Right ventricle myocardium superior (tissue), 1 donor: ENCODE measurements at regions of chr20 and their contacts with region 1.

Region 1: GRCh38 chr20:59751056-59751688 is 146.8 kb downstream of the PHACTR3 start:
- DNase-seq: peak; percentile 85
- ATAC-seq: peak; percentile 71

Region 2: DNA sequence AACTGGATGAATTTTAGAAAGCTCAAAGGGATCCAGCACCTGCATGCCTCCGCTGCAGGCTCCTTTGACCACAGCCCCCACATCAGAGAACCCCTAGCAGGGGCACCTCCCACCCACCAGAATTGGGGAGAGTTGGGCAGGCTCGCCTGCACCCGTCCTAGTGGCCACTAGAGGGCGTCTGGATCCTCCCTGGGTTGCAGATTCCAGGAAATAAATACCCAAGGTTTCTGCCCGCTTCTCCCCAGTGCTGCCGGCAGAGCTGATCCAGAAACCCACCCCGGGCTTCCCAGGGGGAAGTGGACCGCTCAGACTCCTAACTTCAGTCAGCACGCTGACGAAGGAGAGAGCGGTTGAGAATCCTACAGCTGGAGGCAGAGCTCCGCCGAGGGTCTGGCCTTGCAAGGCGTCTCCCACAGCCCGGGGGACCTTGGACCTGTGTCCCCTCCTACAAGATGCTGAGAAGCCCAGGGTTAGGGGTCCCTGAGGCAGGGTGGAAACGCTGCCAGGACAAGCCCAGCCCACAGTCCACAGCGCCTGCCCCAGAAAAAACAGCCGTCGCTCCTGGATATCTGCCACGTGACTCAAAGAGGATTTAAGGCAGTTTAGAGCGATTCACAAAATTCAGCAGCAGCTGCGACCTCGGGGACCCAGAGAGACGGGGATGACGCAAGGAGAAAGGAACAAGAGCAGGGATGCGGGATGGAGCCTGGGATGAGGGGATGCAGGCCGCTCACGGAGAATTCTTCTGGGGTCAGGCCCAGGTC is 179.4 kb before region 1 on chr20:
- intact Hi-C with region 1: loop called (anchors 2 kb)
- DNase-seq: peak; percentile 71
- ATAC-seq: peak; percentile 85

Region 3: GRCh38 chr20:59598625-59599310 is 152.4 kb before region 1 on chr20:
- intact Hi-C with region 1: loop called (anchors 5 kb)
- DNase-seq: no peak
- ATAC-seq: peak; percentile 71

Region 4: GRCh38 chr20:59661661-59662060 is 89.5 kb before region 1 on chr20:
- intact Hi-C with region 1: no loop called
- DNase-seq: no peak
- ATAC-seq: no peak

Region 5: GRCh38 chr20:59820204-59821041 is 69.3 kb after region 1 on chr20:
- intact Hi-C with region 1: no loop called
- DNase-seq: peak; percentile 76
- ATAC-seq: peak; percentile 86